Activated CD8-positive, alpha-beta T cell treated with anti-CD3 and anti-CD28 coated beads for 36 hours (primary cell): ENCODE measurements at regions of chr7 and their contacts with region 1.

Region 1: DNA sequence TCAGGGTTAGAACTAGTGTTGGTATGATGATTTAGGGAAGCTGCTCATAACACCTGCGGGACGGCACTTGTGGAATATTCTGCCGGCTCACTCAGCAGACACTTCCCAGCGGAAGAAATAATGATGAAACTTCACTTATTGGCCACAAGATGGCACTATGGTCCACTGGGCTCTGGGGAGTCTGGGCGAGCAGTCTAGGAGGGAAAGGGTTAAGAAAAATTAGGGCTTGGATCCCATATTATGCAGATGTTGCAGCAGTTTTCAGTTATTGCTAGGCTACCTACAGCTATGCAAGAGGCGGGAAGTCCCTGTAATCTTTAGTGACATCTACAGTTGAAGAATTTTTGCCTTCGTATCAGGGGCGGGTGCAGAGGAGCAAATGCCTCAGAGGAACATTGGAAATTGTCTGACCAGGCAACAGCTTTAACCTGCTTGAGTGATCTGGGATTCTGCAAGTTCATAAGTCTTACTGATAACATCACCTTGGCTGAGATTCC is 238.7 kb upstream of the PRSS58 start:
- DNase-seq: peak; percentile 37
- ATAC-seq: peak; percentile 50
- H3K4me3 Mint-ChIP-seq: peak overlapping the region; percentile 30
- H3K27ac Mint-ChIP-seq: peak overlapping the region; percentile 47
- H3K4me1 Mint-ChIP-seq: peaks cover 37% of the 10 kb centered on the region
- H3K27me3 Mint-ChIP-seq: no peaks in the 10 kb centered on the region
- CTCF ChIP-seq: peak; percentile 74

Region 2: GRCh38 chr7:142478479-142479072 is 18.0 kb before region 1 on chr7:
- CTCF ChIA-PET with region 1: interaction called, 513 read pairs
- POLR2A ChIA-PET with region 1: no interaction called
- intact Hi-C with region 1: no loop called
- DNase-seq: peak; percentile 41
- ATAC-seq: peak; percentile 50
- H3K4me3 Mint-ChIP-seq: no peak overlapping the region
- H3K27ac Mint-ChIP-seq: peak overlapping the region; percentile 25
- H3K4me1 Mint-ChIP-seq: peaks cover 77% of the 10 kb centered on the region
- H3K27me3 Mint-ChIP-seq: no peaks in the 10 kb centered on the region
- CTCF ChIP-seq: peak; percentile 67

Region 3: DNA sequence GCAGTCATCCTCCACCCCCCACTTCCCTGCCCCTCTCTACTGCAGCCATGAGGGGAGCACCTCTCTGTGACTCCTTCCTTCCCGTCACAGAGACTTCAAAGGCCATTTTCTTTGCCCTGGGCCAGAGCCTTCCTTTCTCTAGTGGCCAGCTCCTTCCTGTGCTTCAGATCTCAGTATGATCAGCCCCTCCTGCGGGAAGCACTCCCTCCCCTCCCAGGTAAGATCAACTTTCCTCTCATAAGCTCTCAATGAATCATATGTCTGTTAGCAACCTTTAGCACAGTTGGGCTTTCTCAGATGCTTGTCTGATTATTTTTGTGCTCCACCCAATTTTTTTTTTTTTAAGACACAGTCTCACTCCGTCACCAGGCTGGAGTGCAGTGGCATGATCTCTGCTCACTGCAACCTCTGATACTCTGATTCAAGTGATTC is 11.7 kb after region 1 on chr7:
- CTCF ChIA-PET with region 1: interaction called, 32 read pairs
- POLR2A ChIA-PET with region 1: no interaction called
- intact Hi-C with region 1: no loop called
- DNase-seq: peak; percentile 21
- ATAC-seq: peak; percentile 69
- H3K4me3 Mint-ChIP-seq: no peak overlapping the region
- H3K27ac Mint-ChIP-seq: peak overlapping the region; percentile 78
- H3K4me1 Mint-ChIP-seq: peaks cover 23% of the 10 kb centered on the region
- H3K27me3 Mint-ChIP-seq: no peaks in the 10 kb centered on the region
- CTCF ChIP-seq: no peak

Region 4: GRCh38 chr7:142516038-142516501 is 19.5 kb after region 1 on chr7:
- CTCF ChIA-PET with region 1: interaction called, 42 read pairs
- POLR2A ChIA-PET with region 1: interaction called, 3 read pairs
- intact Hi-C with region 1: no loop called
- DNase-seq: peak; percentile 49
- ATAC-seq: peak; percentile 80
- H3K4me3 Mint-ChIP-seq: no peak overlapping the region
- H3K27ac Mint-ChIP-seq: peak overlapping the region; percentile 35
- H3K4me1 Mint-ChIP-seq: peaks cover 35% of the 10 kb centered on the region
- H3K27me3 Mint-ChIP-seq: no peaks in the 10 kb centered on the region
- CTCF ChIP-seq: peak; percentile 75